ENCODE measurements at regions of chr1 and their contacts with region 1.

Region 1: DNA sequence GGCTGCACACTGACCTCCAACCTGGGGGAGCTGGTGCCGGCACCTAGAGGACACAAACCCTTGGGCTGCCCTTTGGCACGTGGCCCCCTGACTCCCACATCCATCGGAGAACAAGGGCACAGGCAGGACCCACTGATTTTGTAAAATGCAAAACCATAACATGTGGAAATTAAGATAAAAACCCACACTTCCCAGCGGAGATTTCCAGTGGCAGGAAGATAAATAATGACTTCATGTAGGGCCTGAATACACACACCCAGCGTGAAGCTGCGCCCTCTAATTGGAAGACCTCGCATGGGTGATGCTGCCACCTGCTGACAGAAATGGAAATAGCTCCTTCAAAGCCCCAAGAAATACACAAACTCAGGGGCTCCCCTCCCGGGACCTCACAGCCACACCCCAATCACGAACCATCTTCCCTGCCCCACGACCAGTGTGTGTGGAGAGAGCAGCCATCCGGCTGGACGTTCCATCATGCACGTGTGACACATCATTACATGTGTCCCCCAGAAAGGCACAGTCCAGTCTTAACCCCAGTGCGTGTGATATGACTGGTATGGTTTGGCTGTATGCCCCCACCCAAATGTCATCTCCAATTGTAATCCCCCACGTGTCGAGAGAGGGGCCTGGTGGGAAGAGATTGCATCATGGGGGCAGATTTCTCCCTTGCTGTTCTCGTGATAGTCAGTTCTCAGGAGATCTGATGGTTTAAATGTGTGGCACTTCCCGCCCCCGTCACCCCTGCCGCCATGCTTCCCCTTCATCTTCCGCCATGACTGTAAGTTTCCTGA is 5.7 kb upstream of the TPRG1L start:
- DNase-seq: peak; percentile 41 to 93 (median 78)

Region 2: GRCh38 chr1:3453203-3453761 is 165.8 kb before region 1 on chr1:
- intact Hi-C with region 1: loop called (anchors 5 kb)
- DNase-seq: peak in 41 of 42 donors; percentile 65 to 91 (median 83)

Region 3: GRCh38 chr1:3491291-3492246 is 127.5 kb before region 1 on chr1:
- intact Hi-C with region 1: loop called (anchors 2 kb)
- DNase-seq: peak; percentile 56 to 91 (median 84)

Region 4: DNA sequence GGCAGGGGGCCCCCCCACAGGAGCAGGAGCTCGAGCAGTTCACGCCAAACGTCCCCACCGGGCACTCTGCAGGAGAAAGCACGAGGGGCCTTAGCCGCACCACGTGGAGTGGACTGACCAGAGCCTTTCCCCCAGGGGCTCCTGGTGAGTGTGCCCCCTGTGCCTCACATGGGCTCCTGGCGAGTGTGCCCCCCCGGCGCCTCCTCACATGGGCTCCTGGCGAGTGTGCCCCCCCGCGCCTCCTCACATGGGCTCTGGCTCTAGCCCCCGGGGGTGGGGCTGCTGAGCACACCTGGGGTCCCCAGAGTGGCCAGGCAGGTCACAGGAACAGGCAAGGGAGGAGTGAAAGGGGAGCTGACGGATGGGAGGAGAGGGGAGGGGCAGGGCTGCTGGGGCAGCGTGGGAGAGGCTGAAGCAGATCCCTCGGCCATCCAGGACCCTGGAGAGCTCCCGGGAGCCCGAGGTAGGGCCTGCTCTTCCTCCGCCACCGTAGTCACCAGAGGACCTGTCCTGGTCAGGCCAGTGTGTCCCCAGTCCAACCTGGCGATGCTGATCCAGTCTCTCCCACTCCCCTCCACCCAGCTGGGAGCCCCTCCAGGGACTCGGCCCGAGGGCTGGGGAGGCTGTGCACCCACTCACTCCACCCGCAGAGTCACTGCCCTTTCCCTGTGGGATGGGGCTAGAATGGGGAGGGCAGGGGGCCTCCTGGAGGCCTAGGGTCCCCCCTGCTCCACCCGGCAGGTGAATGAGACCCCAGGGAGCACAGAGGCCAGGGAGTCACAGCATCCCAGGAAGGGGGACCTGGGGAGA is 117.0 kb before region 1 on chr1:
- intact Hi-C with region 1: no loop called
- DNase-seq: peak in 17 of 42 donors; percentile 16 to 73 (median 56)

Region 5: DNA sequence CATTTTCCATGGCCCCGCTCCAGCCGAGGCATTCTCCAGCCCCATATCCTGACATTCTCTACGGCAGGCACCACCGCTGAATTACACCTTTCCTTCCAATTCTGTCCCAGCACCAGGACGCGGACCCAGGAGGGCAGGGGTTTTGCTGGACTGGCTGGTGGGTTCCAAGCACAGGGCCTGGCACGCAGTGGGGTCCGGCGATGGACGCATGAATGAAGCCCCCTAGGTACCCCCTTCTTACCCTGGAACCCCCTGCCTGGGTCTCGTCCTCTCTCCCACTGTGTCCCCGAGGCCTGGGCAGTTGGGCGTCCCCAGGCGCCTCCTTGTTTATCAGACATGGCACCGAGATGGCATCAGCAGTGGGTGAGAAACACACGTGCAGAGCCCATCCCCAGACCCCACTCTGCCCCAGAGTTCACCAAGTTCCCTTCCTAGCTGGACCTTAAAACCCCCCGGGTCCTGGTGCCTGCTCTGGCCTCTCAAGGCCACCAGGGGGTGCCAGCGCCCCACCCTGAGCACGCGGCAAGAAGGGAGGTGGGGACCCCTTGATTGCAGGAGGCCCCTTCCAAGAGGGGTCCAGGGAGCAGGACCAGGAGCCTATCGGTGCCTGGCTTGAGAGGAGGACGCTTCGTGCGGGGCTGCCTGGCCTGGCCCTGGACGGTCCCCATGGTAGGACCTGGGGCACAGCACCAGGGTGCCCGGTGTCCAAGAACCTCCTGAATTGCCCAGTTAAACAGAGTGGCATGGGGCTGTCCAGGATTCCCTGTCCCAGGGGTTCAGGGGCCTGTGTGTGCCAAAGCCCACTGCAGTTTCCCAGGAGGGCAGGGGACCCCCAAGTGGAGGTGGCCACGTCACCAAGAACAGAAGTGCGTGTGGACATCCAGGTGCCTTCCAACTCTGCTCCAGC is 53.9 kb before region 1 on chr1:
- intact Hi-C with region 1: loop called (anchors 5 kb)
- DNase-seq: peak in 26 of 42 donors; percentile 13 to 69 (median 47)

Region 6: GRCh38 chr1:3676581-3677470 is 57.8 kb after region 1 on chr1:
- intact Hi-C with region 1: no loop called
- DNase-seq: no peak

Measured in head of caudate nucleus (tissue), 42 donors.